A673 (cell line): ENCODE measurements at regions of chr22 and their contacts with region 1.

Region 1: GRCh38 chr22:39117585-39118191 is 20.6 kb downstream of the APOBEC3H start:
- DNase-seq: peak; percentile 64
- H3K4me3 ChIP-seq: no peak overlapping the region
- H3K27ac ChIP-seq: no peak overlapping the region
- H3K4me1 ChIP-seq: peaks cover 3% of the 10 kb centered on the region
- H3K27me3 ChIP-seq: no peaks in the 10 kb centered on the region
- CTCF ChIP-seq: peak; percentile 69

Region 2: GRCh38 chr22:38416621-38417333 is 700.9 kb before region 1 on chr22:
- CTCF ChIA-PET with region 1: interaction called, 10 read pairs
- POLR2A ChIA-PET with region 1: no interaction called
- intact Hi-C with region 1: no loop called
- DNase-seq: no peak
- H3K4me3 ChIP-seq: no peak overlapping the region
- H3K27ac ChIP-seq: no peak overlapping the region
- H3K4me1 ChIP-seq: no peaks in the 10 kb centered on the region
- H3K27me3 ChIP-seq: no peaks in the 10 kb centered on the region
- CTCF ChIP-seq: no peak

Region 3: GRCh38 chr22:39003165-39003638 is 114.5 kb before region 1 on chr22:
- CTCF ChIA-PET with region 1: interaction called, 8 read pairs
- POLR2A ChIA-PET with region 1: no interaction called
- intact Hi-C with region 1: loop called (anchors 5 kb)
- DNase-seq: peak; percentile 78
- H3K4me3 ChIP-seq: no peak overlapping the region
- H3K27ac ChIP-seq: no peak overlapping the region
- H3K4me1 ChIP-seq: peaks cover 7% of the 10 kb centered on the region
- H3K27me3 ChIP-seq: no peaks in the 10 kb centered on the region
- CTCF ChIP-seq: peak; percentile 74